Transverse colon (tissue), 4 donors: ENCODE measurements at regions of chr18 and their contacts with region 1.

Region 1: DNA sequence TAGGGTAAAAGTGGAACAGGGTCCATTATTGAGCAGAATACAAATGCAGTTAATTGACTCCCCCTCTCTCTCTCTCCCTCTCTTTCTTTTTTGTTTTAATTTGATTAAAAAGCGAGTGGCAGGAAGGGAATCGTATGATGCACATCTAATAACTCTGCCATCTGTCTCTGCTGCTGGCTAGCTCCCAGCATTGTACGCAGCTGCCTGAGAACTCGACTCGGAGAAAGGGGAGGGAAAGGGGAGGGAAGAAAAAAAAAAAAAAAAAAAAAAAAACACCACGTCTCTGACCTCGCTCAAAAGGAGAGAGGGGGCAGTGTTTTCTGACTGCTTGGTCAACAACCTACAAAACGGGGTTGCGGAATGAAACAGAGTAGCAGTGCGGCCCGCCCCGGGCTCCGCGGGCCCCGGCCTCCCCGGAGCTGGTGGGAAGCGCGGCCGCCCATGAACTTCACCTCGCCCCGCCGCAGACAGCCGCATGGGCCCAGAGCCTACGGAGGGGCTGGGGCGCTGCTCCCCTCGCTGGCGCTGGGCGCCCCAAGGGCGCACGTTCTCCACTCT is 265.7 kb downstream of the TCF4 start:
- DNase-seq: peak; percentile 75
- H3K4me3 ChIP-seq: peak overlapping the region; percentile 27 to 52 (median 45)
- H3K27ac ChIP-seq: peak overlapping the region; percentile 87 to 94 (median 92)
- H3K4me1 ChIP-seq: peaks cover 1 to 31% (median 3%) of the 10 kb centered on the region in 4 donors
- H3K27me3 ChIP-seq: peaks cover 16% of the 10 kb centered on the region
- CTCF ChIP-seq: no peak
- EP300 ChIP-seq: no peak
- POLR2A ChIP-seq: peak; percentile 71

Region 2: GRCh38 chr18:55079481-55080355 is 242.5 kb before region 1 on chr18:
- in situ Hi-C with region 1: no loop called
- intact Hi-C with region 1: no loop called
- DNase-seq: no peak
- H3K4me3 ChIP-seq: no peak overlapping the region
- H3K27ac ChIP-seq: no peak overlapping the region
- H3K4me1 ChIP-seq: no peaks in the 10 kb centered on the region
- H3K27me3 ChIP-seq: no peaks in the 10 kb centered on the region
- CTCF ChIP-seq: no peak
- EP300 ChIP-seq: no peak
- POLR2A ChIP-seq: no peak

Region 3: DNA sequence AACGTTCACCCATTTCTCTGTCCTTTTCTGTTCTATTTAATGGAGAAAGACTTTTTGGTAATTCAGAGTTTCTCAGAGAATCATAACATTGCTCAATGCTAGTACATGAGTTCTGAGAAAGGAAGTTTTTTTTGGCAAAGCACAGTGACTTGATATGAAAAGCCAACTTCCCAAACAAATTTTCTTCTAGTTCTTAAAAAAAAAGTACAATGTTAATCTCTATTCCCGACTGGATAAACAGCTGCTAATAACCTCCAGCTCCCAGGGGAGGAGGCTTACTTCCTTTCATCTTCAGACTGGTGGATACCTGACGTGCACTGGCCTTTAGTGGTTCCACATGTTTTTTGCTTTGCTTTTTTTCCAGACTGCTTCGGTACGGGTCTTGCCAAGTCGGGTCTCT is 78.4 kb before region 1 on chr18:
- in situ Hi-C with region 1: no loop called
- intact Hi-C with region 1: loop called (anchors 5 kb)
- DNase-seq: no peak
- H3K4me3 ChIP-seq: no peak overlapping the region
- H3K27ac ChIP-seq: peak overlapping the region; percentile 62 to 72 (median 72)
- H3K4me1 ChIP-seq: peaks cover 5 to 41% (median 12%) of the 10 kb centered on the region in 4 donors
- H3K27me3 ChIP-seq: no peaks in the 10 kb centered on the region
- CTCF ChIP-seq: no peak
- EP300 ChIP-seq: no peak
- POLR2A ChIP-seq: no peak

Region 4: DNA sequence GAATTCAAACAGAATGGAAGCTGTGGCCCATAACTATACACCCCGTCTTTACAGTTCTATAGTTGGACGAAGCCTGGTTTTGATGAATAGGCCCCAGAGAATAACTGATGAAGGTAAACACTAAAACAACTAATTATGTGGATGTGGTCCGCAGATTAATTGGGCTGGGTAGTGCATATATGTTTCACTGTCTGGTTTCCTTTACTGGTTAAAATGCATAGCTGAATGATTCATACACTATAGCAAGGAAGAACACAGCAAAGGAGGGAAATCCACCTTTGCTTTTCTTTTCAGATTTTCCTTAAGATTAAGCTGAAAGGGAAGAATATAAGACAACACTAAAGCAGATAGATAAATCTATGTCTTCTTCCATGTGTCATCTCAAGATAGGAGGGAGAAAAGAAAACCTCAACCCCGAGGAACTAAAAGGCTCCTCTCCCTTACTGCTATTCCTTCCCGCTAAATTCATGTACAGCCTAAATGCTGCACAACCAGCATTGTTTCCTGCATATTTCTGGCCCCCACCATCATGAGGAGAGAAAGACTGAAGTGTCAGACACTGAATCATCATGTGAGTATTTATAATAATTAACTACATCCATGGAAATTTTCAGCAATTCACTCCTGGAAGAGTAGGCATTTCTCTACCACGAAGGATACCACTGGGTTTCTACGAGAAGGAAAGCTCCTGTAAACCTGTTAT is 65.9 kb before region 1 on chr18:
- in situ Hi-C with region 1: no loop called
- intact Hi-C with region 1: no loop called
- DNase-seq: no peak
- H3K4me3 ChIP-seq: no peak overlapping the region
- H3K27ac ChIP-seq: no peak overlapping the region
- H3K4me1 ChIP-seq: peaks cover 3 to 14% (median 7%) of the 10 kb centered on the region in 4 donors
- H3K27me3 ChIP-seq: no peaks in the 10 kb centered on the region
- CTCF ChIP-seq: no peak
- EP300 ChIP-seq: no peak
- POLR2A ChIP-seq: no peak

Region 5: DNA sequence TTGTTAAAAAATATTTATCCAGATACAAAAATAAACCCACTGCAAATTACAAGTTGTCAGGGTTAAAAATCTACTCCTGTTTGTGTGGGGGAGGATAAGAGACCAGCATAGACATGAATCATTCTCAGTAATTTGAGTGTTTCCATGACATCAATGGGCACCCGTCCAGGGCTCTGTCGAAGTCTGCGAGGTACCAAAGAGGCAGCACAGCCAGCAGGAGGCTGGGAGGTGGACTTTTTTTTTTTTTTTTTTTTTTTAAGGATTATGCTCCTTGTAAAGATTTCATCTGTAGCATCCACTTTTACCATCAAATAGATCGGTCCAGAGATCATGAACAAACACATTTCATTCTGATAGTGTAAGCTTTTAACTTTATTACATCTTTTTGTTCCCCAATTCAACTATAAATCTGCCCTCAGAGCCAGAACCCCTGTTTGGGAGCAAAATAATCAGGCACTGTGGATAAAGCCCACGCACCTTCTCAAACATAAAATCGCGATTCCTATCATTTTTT is 83.7 kb after region 1 on chr18:
- in situ Hi-C with region 1: no loop called
- intact Hi-C with region 1: loop called (anchors 10 kb)
- DNase-seq: peak; percentile 42
- H3K4me3 ChIP-seq: no peak overlapping the region
- H3K27ac ChIP-seq: peak overlapping the region; percentile 57 to 83 (median 78)
- H3K4me1 ChIP-seq: peaks cover 0 to 14% (median 3%) of the 10 kb centered on the region in 4 donors
- H3K27me3 ChIP-seq: no peaks in the 10 kb centered on the region
- CTCF ChIP-seq: no peak
- EP300 ChIP-seq: no peak
- POLR2A ChIP-seq: no peak